Head of caudate nucleus (tissue), 42 donors: ENCODE measurements at regions of chr10 and their contacts with region 1.

Region 1: GRCh38 chr10:92517034-92517655 is 56.7 kb downstream of the IDE start:
- DNase-seq: peak in 40 of 42 donors; percentile 33 to 92 (median 76)

Region 2: DNA sequence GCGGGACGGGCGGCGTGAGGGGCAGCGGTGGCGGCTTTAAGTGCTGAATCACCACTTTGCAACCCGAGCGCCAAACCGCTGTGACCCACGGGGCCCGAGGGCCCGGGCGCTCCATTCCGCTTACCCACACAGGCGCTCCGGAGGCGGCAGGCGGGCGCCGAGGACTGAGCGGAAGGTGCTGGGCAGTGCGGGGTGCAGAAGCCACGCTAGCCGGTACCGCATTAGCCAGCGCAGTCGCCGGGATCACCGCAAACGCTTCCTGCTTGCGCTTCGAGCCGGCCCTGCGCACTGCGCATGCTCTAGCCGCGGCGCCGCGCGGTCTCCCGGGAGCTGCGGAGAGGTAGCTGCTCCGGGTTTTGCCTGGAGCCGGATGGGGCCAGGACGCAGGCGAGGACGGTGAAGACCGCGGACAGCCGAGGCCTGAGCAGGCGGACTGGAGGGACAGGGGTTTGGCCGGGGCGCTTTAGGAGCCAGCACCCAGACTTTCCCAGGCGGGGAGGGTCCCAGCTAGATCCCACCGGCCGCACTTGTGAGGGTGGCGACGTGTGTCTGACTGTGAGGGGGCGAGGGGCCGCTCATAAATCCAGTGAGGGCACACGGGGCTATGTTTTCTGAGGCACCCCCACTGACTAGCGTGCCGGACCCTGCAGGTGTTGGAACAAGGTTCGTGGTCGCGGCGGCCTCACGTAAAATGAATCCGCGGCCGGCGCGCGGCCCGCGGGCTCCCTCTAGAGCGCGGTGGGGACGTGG is 56.8 kb after region 1 on chr10 and contains the start of gene IDE:
- intact Hi-C with region 1: loop called (anchors 2 kb)
- DNase-seq: peak; percentile 65 to 93 (median 85)

Region 3: GRCh38 chr10:92880233-92880861 is 363.2 kb after region 1 on chr10:
- intact Hi-C with region 1: loop called (anchors 10 kb)
- DNase-seq: peak in 13 of 42 donors; percentile 10 to 67 (median 38)